GM12878 (cell line): ENCODE measurements at regions of chr11 and their contacts with region 1.

Region 1: DNA sequence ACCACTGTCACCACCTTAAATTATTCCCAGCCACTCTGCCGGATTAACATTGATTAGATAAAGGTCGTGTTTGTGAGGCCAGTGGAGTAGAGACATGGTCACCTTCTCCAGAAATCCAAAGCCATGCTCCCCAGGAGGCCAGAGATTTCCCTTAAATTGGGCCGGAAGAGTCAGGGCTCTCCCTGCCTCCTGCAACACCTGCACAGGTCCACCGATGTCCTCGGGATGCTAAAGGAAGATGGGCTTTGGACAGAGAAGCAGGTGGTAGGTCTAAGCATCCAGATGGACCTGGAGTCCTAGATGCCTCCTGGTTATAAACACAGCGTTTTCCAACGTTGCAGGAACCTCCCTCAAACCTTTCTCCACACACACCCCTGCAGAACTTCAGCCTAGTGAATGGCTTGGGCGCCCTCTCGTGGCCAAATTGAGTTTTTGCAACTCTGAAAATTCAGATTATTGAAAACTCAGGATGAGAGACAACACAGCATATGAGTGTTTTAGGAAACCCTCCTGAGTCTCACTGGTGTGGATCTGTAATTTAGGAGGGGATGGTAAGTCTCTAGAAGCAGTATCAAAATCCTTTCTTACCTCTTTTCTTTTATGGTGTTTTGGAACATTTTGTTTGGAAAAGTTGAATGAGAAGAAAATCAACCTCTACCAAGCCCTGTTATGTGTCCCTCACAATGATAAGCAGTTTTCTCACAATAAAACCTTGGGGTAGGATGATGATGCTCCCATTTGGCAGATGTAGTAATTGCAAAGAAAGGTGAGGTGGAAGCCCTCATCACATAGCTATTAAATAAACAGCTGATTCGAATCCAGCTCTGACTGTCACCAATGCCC is 109.6 kb downstream of the RRAS2 start:
- DNase-seq: no peak
- ATAC-seq: peak; percentile 71
- H3K4me3 ChIP-seq: no peak overlapping the region
- H3K27ac ChIP-seq: no peak overlapping the region
- H3K4me1 ChIP-seq: no peaks in the 10 kb centered on the region; the same call in 1 of the 2 replicates
- H3K27me3 ChIP-seq: no peaks in the 10 kb centered on the region; a peak in 1 of 4 replicates
- CTCF ChIP-seq: peak; percentile 70 to 93 (median 83)
- EP300 ChIP-seq: no peak
- POLR2A ChIP-seq: no peak
- RAD21 ChIP-seq: peak; percentile 99

Region 2: DNA sequence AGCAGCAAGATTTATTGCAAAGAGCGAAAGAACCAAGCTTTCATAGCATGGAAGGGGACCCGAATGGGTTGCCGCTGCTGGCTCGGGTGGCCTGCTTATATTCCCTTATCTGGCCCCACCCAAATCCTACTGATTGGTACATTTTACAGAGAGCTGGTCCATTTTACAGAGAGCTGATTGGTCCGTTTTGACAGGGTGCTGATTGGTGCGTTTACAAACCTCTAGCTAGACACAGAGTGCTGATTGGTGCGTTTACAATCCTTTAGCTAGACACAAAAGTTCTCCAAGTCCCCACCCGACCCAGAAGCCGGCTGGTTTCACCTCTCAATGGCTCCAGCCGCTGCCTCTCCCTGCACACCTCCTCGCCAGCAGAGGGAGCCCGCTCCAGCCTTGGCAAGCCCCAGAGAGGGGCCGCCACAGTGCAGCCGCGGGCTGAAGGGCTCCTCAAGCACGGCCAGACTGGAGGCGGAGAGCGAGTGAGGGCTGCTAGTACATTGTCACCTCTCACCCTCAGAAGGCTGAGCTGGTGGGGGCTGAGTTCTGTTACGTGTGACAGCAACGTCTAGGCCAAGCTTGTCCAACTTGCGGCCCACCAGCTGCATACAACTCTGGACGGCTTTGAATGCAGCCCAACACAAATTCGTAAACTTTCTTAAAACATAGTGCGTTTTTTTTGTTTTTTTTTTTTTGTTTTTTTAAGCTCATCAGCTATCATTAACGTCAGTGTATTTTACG is 762.2 kb before region 1 on chr11:
- CTCF ChIA-PET with region 1: interaction called, 3 read pairs
- POLR2A ChIA-PET with region 1: no interaction called
- RAD21 ChIA-PET with region 1: no interaction called
- SMC1A ChIA-PET with region 1: no interaction called
- in situ Hi-C with region 1: no loop called
- intact Hi-C with region 1: loop called (anchors 10 kb)
- DNase-seq: no peak
- ATAC-seq: peak; percentile 87
- H3K4me3 ChIP-seq: no peak overlapping the region
- H3K27ac ChIP-seq: no peak overlapping the region
- H3K4me1 ChIP-seq: no peaks in the 10 kb centered on the region
- H3K27me3 ChIP-seq: no peaks in the 10 kb centered on the region
- CTCF ChIP-seq: peak in 2 of 3 experiments; percentile 12 to 15; a peak in 1 of 6 replicates
- EP300 ChIP-seq: no peak
- POLR2A ChIP-seq: no peak
- RAD21 ChIP-seq: no peak

Region 3: DNA sequence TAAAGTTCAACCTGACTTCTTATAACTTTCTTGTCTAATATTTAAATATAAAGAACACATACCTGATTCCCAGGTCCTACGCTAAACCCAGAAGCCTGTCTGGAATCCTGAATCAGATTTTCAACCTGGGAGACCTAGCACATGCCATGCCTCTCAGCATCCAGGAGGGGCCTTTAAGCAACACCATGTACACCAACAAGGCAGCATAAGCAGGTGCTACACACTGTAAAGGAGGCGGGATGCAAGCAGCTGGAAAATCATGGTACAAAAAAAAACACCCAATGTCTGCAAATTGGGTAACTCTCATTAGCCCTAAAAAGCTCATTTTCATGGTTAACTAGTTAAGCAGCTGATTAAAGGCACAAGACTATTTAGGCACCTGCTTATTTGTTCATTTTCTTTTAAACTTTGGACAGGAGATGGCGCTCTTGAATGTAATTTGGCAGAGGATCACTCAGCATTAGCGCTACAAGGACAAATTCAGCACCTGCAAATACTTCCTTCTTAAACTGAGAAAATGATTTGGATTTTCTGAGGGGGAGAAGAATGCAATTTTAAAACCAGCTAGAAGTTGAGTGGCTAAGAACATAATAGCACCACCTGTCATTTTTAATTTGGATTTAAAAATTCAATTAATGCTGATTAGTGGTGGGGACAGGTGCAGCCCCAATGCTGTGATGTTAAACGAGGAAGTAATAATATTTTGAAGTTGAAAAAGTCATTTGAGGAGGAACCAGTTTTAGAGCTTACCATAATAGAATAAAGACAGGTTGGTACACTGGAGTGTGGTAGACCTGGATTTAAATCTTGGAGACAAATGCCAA is 476.9 kb before region 1 on chr11:
- CTCF ChIA-PET with region 1: interaction called, 20 read pairs
- POLR2A ChIA-PET with region 1: no interaction called
- RAD21 ChIA-PET with region 1: interaction called, 7 read pairs
- SMC1A ChIA-PET with region 1: interaction called, 11 read pairs
- in situ Hi-C with region 1: loop called (anchors 5 kb)
- intact Hi-C with region 1: loop called (anchors 1 kb)
- DNase-seq: peak; percentile 11
- ATAC-seq: peak; percentile 88
- H3K4me3 ChIP-seq: no peak overlapping the region
- H3K27ac ChIP-seq: no peak overlapping the region
- H3K4me1 ChIP-seq: no peaks in the 10 kb centered on the region
- H3K27me3 ChIP-seq: no peaks in the 10 kb centered on the region
- CTCF ChIP-seq: peak; percentile 24 to 58 (median 54); a peak in 4 of 6 replicates
- EP300 ChIP-seq: no peak
- POLR2A ChIP-seq: no peak
- RAD21 ChIP-seq: peak; percentile 73

Region 4: DNA sequence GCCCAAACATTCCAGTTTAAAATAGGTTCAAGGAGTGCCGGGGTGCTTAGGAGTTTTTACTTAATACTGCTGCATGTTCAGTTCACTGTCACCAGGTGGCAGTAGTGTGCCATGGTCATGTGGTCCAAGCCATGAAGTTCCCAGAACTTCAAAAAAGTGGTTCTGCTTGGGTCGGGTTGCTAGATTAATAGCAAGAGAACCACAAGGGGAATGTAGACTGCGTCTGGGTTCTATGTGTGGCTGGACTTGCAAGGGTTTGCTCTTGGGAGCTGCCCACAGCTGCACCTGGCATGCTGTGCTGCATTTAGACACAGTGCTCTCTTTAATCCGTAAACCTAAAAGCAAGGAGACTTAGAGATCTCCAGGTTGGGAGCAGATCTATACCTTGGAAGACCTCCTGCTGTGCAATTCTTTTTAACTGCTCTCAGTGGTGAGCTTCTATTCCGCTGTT is 293.3 kb before region 1 on chr11:
- CTCF ChIA-PET with region 1: interaction called, 32 read pairs
- POLR2A ChIA-PET with region 1: no interaction called
- RAD21 ChIA-PET with region 1: interaction called, 7 read pairs
- SMC1A ChIA-PET with region 1: interaction called, 24 read pairs
- in situ Hi-C with region 1: loop called (anchors 5 kb)
- intact Hi-C with region 1: loop called (anchors 1 kb)
- DNase-seq: no peak
- ATAC-seq: peak; percentile 77
- H3K4me3 ChIP-seq: no peak overlapping the region
- H3K27ac ChIP-seq: no peak overlapping the region
- H3K4me1 ChIP-seq: no peaks in the 10 kb centered on the region
- H3K27me3 ChIP-seq: peaks cover 0 to 1% of the 10 kb centered on the region in 2 experiments; a peak in 2 of 4 replicates
- CTCF ChIP-seq: peak; percentile 80 to 83 (median 81)
- EP300 ChIP-seq: no peak
- POLR2A ChIP-seq: no peak
- RAD21 ChIP-seq: peak; percentile 80

Region 5: DNA sequence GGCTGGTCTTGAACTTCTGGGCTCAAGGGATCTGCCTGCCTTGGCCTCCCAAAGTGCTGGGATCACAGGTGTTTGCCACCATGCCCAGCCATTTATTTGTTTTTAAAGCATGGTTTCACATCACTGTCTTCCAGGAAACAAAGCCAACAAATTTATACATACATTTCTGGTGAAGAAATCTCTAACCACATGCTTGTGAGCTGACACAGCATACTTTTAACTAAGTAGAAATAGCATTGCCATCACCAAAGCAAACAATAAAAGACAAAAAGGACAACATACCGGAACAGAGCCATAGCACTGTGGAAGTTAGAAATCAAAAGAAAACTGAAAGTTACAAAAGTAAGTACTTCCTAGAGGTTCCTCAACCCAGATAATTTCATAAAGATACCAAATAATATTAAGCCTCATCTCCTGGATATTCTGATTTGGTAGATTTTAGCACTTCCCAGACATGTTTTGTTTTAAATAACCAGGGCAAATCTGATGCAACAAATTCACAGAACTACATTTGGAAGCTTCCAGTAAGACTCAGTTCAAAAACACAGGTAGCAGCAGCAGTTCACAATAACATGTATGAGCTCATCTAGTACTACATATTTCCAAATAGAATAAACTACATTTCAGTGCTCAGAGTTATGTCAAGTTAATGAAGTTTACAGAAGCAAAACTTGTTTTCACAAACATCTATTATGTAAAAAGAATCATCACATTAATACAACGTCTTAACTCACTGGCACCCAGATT is 39.0 kb after region 1 on chr11:
- CTCF ChIA-PET with region 1: no interaction called
- POLR2A ChIA-PET with region 1: no interaction called
- RAD21 ChIA-PET with region 1: no interaction called
- SMC1A ChIA-PET with region 1: no interaction called
- in situ Hi-C with region 1: no loop called
- intact Hi-C with region 1: no loop called
- DNase-seq: no peak
- ATAC-seq: no peak
- H3K4me3 ChIP-seq: no peak overlapping the region
- H3K27ac ChIP-seq: no peak overlapping the region
- H3K4me1 ChIP-seq: no peaks in the 10 kb centered on the region
- H3K27me3 ChIP-seq: no peaks in the 10 kb centered on the region
- CTCF ChIP-seq: no peak
- EP300 ChIP-seq: no peak
- POLR2A ChIP-seq: no peak
- RAD21 ChIP-seq: no peak

Region 6: GRCh38 chr11:14413307-14414069 is 164.1 kb after region 1 on chr11:
- CTCF ChIA-PET with region 1: interaction called, 45 read pairs
- POLR2A ChIA-PET with region 1: no interaction called
- RAD21 ChIA-PET with region 1: interaction called, 4 read pairs
- SMC1A ChIA-PET with region 1: interaction called, 5 read pairs
- in situ Hi-C with region 1: no loop called
- intact Hi-C with region 1: no loop called
- DNase-seq: no peak
- ATAC-seq: peak; percentile 22; the same call in 1 of the 3 replicates
- H3K4me3 ChIP-seq: no peak overlapping the region
- H3K27ac ChIP-seq: no peak overlapping the region
- H3K4me1 ChIP-seq: peaks cover 10% of the 10 kb centered on the region
- H3K27me3 ChIP-seq: no peaks in the 10 kb centered on the region
- CTCF ChIP-seq: peak in 1 of 3 experiments; percentile 32; a peak in 1 of 6 replicates
- EP300 ChIP-seq: no peak
- POLR2A ChIP-seq: no peak
- RAD21 ChIP-seq: no peak